OCI-LY7 (cell line): ENCODE measurements at regions of chr12 and their contacts with region 1.

Region 1: GRCh38 chr12:99393763-99394162 is 253.8 kb upstream of the GARIN6 start:
- DNase-seq: peak; percentile 97
- H3K4me3 ChIP-seq: peak overlapping the region; percentile 21
- H3K27ac ChIP-seq: peak overlapping the region; percentile 99
- H3K4me1 ChIP-seq: peaks cover 76% of the 10 kb centered on the region
- CTCF ChIP-seq: no peak

Region 2: DNA sequence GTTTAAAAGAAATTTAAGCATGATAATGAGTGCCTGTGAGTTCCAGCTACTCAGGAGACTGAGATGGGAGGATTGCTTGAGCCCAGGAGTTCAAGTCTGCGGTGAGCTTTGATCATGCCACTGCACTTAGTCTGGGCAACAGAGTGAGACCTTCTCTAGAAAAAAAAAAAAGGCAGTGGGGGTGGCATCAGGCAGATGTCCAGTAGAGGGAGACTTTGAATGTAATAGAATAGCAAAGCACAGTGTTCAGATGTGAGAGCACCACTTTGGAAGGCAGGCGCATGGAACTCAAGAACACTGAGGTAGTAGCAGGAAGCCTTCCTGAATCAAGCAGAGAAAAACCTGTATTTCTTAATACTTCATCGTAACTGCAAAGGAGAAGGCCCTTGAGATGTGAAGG is 140.7 kb before region 1 on chr12:
- CTCF ChIA-PET with region 1: no interaction called
- POLR2A ChIA-PET with region 1: no interaction called
- intact Hi-C with region 1: loop called (anchors 2 kb)
- DNase-seq: peak; percentile 74
- H3K4me3 ChIP-seq: no peak overlapping the region
- H3K27ac ChIP-seq: no peak overlapping the region
- H3K4me1 ChIP-seq: peaks cover 12% of the 10 kb centered on the region
- CTCF ChIP-seq: peak; percentile 76

Region 3: GRCh38 chr12:99600388-99600787 is 206.6 kb after region 1 on chr12:
- CTCF ChIA-PET with region 1: interaction called, 8 read pairs
- POLR2A ChIA-PET with region 1: interaction called, 11 read pairs
- intact Hi-C with region 1: loop called (anchors 1 kb)
- DNase-seq: peak; percentile 99
- H3K4me3 ChIP-seq: peak overlapping the region; percentile 41
- H3K27ac ChIP-seq: peak overlapping the region; percentile 99
- H3K4me1 ChIP-seq: peaks cover 49% of the 10 kb centered on the region
- CTCF ChIP-seq: no peak

Region 4: GRCh38 chr12:99658671-99659349 is 265.0 kb after region 1 on chr12:
- CTCF ChIA-PET with region 1: interaction called, 6 read pairs
- POLR2A ChIA-PET with region 1: interaction called, 8 read pairs
- intact Hi-C with region 1: loop called (anchors 1 kb)
- DNase-seq: peak; percentile 64
- H3K4me3 ChIP-seq: no peak overlapping the region
- H3K27ac ChIP-seq: peak overlapping the region; percentile 62
- H3K4me1 ChIP-seq: peaks cover 41% of the 10 kb centered on the region
- CTCF ChIP-seq: peak; percentile 94